Posterior cingulate gyrus (tissue), 11 donors: ENCODE measurements at regions of chr6 and their contacts with region 1.

Region 1: DNA sequence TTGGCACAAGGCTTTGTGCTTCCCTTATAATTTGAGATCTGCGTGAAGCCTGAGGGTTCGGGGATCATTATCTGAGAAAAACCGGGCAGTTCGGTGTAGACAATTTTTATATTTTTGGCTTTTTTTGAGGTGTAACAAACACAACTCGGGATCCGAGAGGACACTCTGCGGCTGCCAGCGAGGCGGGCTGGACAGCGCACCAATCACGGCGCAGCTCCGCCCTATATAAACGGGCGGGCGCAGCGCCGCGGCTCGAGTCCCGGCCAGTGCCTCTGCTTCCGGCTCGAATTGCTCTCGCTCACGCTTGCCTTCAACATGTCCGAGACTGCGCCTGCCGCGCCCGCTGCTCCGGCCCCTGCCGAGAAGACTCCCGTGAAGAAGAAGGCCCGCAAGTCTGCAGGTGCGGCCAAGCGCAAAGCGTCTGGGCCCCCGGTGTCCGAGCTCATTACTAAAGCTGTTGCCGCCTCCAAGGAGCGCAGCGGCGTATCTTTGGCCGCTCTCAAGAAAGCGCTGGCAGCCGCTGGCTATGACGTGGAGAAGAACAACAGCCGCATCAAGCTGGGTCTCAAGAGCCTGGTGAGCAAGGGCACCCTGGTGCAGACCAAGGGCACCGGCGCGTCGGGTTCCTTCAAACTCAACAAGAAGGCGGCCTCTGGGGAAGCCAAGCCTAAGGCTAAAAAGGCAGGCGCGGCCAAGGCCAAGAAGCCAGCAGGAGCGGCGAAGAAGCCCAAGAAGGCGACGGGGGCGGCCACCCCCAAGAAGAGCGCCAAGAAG is 69.0 kb downstream of the HFE start:
- DNase-seq: peak; percentile 81 to 98 (median 89)

Region 2: GRCh38 chr6:25746968-25747367 is 409.3 kb before region 1 on chr6:
- intact Hi-C with region 1: no loop called
- DNase-seq: no peak

Region 3: DNA sequence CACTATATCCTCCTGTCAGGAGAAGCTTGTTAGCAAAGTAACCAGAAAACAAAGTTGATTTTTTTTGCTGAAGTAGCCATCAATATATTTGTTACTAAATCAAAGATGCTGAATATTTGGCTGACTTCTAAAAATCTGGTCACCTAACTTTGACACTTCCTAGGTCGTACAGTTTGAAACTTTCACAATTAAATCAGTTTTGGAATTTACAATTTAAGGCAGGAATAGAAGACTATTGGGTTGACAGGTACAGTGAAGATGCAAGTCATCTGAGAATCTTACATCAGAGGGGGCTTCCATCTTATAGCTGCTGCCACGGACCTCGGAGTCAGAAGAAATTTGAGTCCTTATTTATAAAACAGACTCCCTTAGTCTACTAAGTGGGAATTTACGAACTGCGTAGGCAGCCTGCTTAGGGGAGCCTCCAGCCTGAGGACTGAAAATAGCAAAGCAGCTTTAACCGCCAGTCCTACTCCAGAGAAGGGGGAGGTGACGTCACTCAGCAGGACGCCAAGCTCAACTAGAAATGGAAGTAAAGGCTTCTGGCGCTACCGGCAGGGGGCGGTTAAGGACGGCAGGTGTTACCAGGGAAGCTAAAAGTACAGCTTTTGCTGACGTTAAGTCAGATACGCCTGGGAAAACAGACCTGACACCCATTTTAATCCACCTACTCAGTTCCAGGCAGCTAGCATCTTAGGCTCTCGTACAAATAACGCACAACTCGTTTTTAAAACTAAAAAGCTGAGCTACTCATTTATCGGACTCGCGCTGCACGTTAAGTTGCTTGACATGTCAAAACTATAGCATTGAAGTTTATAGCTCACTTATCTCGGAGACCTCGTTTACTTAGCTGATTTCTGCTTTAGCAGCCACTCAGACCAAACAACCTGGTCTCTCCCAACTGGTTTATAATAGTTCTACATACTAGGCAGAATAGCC is 130.1 kb before region 1 on chr6:
- intact Hi-C with region 1: no loop called
- DNase-seq: peak; percentile 74 to 98 (median 88)

Region 4: GRCh38 chr6:26141378-26141904 is 14.8 kb before region 1 on chr6:
- intact Hi-C with region 1: loop called (anchors 2 kb)
- DNase-seq: peak; percentile 56 to 96 (median 68)

Region 5: GRCh38 chr6:26196846-26197648 is 40.8 kb after region 1 on chr6:
- intact Hi-C with region 1: loop called (anchors 5 kb)
- DNase-seq: peak; percentile 52 to 96 (median 78)